ENCODE measurements at regions of chr19 and their contacts with region 1.

Region 1: GRCh38 chr19:5225486-5226345 is 114.9 kb downstream of the PTPRS start:
- DNase-seq: no peak
- ATAC-seq: no peak
- H3K4me3 ChIP-seq: no peak overlapping the region
- H3K27ac ChIP-seq: no peak overlapping the region
- H3K4me1 ChIP-seq: peaks cover 15% of the 10 kb centered on the region
- H3K27me3 ChIP-seq: no peaks in the 10 kb centered on the region
- CTCF ChIP-seq: peak; percentile 71

Region 2: GRCh38 chr19:5038631-5039271 is 187.0 kb before region 1 on chr19:
- CTCF ChIA-PET with region 1: no interaction called
- POLR2A ChIA-PET with region 1: no interaction called
- intact Hi-C with region 1: no loop called
- DNase-seq: peak; percentile 56
- ATAC-seq: peak; percentile 42
- H3K4me3 ChIP-seq: no peak overlapping the region
- H3K27ac ChIP-seq: no peak overlapping the region
- H3K4me1 ChIP-seq: no peaks in the 10 kb centered on the region
- H3K27me3 ChIP-seq: no peaks in the 10 kb centered on the region
- CTCF ChIP-seq: peak; percentile 76

Region 3: GRCh38 chr19:5170329-5170745 is 55.4 kb before region 1 on chr19:
- CTCF ChIA-PET with region 1: no interaction called
- POLR2A ChIA-PET with region 1: no interaction called
- intact Hi-C with region 1: loop called (anchors 5 kb)
- DNase-seq: no peak
- ATAC-seq: no peak
- H3K4me3 ChIP-seq: no peak overlapping the region
- H3K27ac ChIP-seq: no peak overlapping the region
- H3K4me1 ChIP-seq: peaks cover 51% of the 10 kb centered on the region
- H3K27me3 ChIP-seq: no peaks in the 10 kb centered on the region
- CTCF ChIP-seq: peak; percentile 79